CD4-positive, alpha-beta memory T cell (primary cell): ENCODE measurements at regions of chr6 and their contacts with region 1.

Region 1: DNA sequence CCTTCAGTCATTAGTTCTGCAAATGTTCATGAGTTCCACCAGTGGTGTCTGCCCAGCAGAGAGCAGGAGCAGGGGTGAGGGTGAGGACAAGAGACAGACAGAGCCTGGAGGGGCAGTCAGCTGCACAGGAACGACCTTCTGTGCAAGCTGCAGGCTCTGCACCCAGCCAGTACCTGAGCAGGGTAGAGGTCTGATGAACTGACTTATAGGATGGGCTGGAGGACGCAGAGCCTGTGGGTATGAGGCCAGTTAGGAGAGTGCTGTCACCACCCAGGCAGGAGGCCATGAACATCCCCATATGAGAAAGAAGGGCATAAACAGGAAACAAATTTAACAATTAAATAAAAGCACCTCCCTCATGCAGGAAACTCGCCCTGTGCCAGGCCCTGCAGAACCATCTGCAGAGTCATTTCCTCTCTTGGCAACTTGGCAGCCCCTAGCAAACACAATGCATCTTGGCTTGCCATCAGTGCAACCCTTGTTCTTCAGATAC is 17.9 kb downstream of the C6orf15 start:
- DNase-seq: peak; percentile 43 to 66 (median 57)
- H3K4me3 ChIP-seq: peak overlapping the region in 1 of 2 donors; percentile 25
- H3K4me3 Mint-ChIP-seq: peak overlapping the region; percentile 58 to 91 (median 76)
- H3K27ac ChIP-seq: peak overlapping the region; percentile 40
- H3K27ac Mint-ChIP-seq: peak overlapping the region; percentile 82 to 93 (median 90)
- H3K4me1 ChIP-seq: peaks cover 61% of the 10 kb centered on the region
- H3K4me1 Mint-ChIP-seq: peaks cover 38 to 58% (median 52%) of the 10 kb centered on the region in 4 donors
- H3K27me3 ChIP-seq: no peaks in the 10 kb centered on the region
- H3K27me3 Mint-ChIP-seq: no peaks in the 10 kb centered on the region

Region 2: GRCh38 chr6:30914076-30914853 is 180.2 kb before region 1 on chr6 and contains the start of gene VARS2:
- CTCF ChIA-PET with region 1: interaction called, 8 read pairs
- POLR2A ChIA-PET with region 1: interaction called, 11 read pairs
- intact Hi-C with region 1: loop called (anchors 5 kb)
- DNase-seq: peak; percentile 86 to 92 (median 89)
- H3K4me3 ChIP-seq: peak within 1 kb of the TSS; percentile 70 to 94
- H3K4me3 Mint-ChIP-seq: peak within 1 kb of the TSS; percentile 89 to 96 (median 95)
- H3K27ac ChIP-seq: peak within 1 kb of the TSS; percentile 77
- H3K27ac Mint-ChIP-seq: peak within 1 kb of the TSS; percentile 83 to 98 (median 94)
- H3K4me1 ChIP-seq: peaks cover 21% of the 10 kb centered on the region
- H3K4me1 Mint-ChIP-seq: peaks cover 24 to 47% (median 34%) of the 10 kb centered on the region in 4 donors
- H3K27me3 ChIP-seq: no peaks in the 10 kb centered on the region
- H3K27me3 Mint-ChIP-seq: no peaks in the 10 kb centered on the region
- total RNA-seq, gene VARS2: 34.9 to 37.8 TPM

Region 3: GRCh38 chr6:31068669-31069340 is 25.6 kb before region 1 on chr6:
- CTCF ChIA-PET with region 1: interaction called, 15 read pairs
- POLR2A ChIA-PET with region 1: no interaction called
- intact Hi-C with region 1: no loop called
- DNase-seq: peak; percentile 58 to 72 (median 66)
- H3K4me3 ChIP-seq: no peak overlapping the region
- H3K4me3 Mint-ChIP-seq: no peak overlapping the region
- H3K27ac ChIP-seq: no peak overlapping the region
- H3K27ac Mint-ChIP-seq: peak overlapping the region in 2 of 7 donors; percentile 12 to 17
- H3K4me1 ChIP-seq: no peaks in the 10 kb centered on the region
- H3K4me1 Mint-ChIP-seq: peaks cover 0 to 2% (median 0%) of the 10 kb centered on the region in 4 donors
- H3K27me3 ChIP-seq: no peaks in the 10 kb centered on the region
- H3K27me3 Mint-ChIP-seq: peaks cover 0 to 3% of the 10 kb centered on the region in 2 donors

Region 4: DNA sequence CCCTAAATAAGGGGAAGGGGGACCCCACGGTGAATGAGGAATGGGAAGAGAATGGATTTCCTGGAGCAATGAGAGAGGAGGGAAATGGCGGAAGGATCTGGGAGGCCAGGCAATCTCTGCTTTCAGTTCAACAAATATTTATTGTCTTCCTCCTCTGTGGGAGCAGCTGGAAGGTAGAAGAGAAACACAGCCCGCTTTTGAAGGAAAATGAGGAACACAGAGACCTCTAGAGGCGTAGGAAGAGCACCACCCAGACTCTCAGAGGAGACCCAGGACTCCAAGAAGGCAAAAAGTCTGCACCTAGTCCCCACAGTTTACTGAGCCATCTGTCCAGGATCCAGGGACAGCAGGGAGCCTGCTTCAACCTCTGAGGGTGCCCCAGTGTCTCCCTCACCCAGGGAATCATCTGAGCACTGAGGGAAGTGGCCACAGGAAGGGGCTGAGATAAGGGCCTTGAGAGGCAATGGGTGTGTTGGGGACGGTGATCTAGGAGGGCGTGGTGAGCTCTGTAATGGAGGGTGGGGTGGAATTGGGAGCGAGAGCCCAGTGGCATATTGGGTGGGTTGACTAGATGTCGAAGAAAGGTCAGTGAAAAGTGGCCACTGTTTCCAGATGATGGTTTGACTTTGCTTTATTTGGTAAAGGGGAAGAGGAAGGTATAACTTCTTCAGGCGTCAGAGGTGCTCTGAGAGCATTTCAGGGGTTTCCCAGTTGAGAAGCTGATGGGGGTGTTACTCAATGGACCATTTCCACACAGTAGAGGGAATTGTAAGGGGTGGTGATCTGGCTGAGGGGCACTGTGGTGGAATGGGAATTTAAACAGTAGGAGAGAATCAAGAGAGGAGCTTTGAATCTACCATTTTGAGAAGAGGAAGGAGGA is 20.8 kb after region 1 on chr6:
- CTCF ChIA-PET with region 1: interaction called, 40 read pairs
- POLR2A ChIA-PET with region 1: interaction called, 11 read pairs
- intact Hi-C with region 1: no loop called
- DNase-seq: peak in 1 of 5 donors; percentile 40
- H3K4me3 ChIP-seq: no peak overlapping the region
- H3K4me3 Mint-ChIP-seq: peak overlapping the region in 2 of 8 donors; percentile 16 to 41
- H3K27ac ChIP-seq: no peak overlapping the region
- H3K27ac Mint-ChIP-seq: peak overlapping the region in 4 of 7 donors; percentile 12 to 80 (median 46)
- H3K4me1 ChIP-seq: peaks cover 5% of the 10 kb centered on the region
- H3K4me1 Mint-ChIP-seq: peaks cover 2 to 8% (median 5%) of the 10 kb centered on the region in 4 donors
- H3K27me3 ChIP-seq: no peaks in the 10 kb centered on the region
- H3K27me3 Mint-ChIP-seq: peaks cover 2 to 3% of the 10 kb centered on the region in 2 donors

Region 5: DNA sequence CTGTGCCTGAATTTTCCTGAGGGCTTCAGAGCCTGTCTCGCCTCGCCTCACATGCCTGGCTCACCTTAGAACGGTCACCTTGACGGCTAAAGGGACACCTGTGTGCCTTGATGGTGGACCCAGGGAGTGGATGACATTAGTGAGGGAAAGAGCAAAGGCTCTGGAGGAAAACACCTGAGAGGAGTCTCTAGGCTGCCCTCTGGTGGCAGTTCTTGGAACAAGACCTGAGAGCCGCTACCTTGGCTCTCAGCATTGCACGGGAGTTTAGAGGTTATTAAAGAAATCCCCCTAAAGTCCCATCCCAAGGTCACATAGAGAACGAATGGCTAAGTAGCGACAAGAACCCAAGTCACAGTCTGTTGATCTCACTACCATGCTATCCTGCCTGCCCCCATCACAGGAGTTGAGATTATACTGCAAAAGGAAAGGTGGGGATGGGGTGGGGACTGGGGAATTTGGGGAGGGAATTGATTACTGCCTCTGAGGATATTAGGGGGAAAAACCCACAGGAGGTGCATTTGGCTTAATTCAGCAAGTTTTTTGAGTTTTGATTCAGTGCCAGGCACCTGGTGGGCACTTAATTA is 33.8 kb after region 1 on chr6:
- CTCF ChIA-PET with region 1: interaction called, 29 read pairs
- POLR2A ChIA-PET with region 1: no interaction called
- intact Hi-C with region 1: loop called (anchors 1 kb)
- DNase-seq: peak; percentile 57 to 70 (median 62)
- H3K4me3 ChIP-seq: no peak overlapping the region
- H3K4me3 Mint-ChIP-seq: no peak overlapping the region
- H3K27ac ChIP-seq: no peak overlapping the region
- H3K27ac Mint-ChIP-seq: peak overlapping the region in 3 of 7 donors; percentile 7 to 52 (median 24)
- H3K4me1 ChIP-seq: peaks cover 3% of the 10 kb centered on the region
- H3K4me1 Mint-ChIP-seq: peaks cover 2 to 8% (median 7%) of the 10 kb centered on the region in 4 donors
- H3K27me3 ChIP-seq: no peaks in the 10 kb centered on the region
- H3K27me3 Mint-ChIP-seq: peaks cover 3 to 6% of the 10 kb centered on the region in 2 donors